Aorta (tissue), 5 donors: ENCODE measurements at regions of chr6 and their contacts with region 1.

Region 1: DNA sequence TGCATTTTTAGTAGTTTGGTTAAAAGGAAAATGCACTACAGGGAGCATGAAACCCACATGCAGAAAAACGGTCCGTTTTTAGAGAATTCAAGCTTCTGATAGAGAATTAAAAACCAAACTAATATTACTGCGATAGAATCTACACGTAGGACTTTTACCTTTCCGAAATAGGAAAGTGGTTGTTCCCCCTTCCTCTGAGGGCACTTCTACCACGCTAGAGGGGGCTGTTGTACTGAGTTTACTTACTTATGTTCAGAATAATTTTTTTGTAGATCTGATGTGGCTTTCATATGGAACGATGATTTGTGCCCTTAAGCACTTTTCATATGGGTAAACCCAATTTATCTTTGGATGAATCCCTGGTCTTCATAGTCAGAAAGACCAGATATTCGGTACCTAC is 264.3 kb upstream of the PLN start:
- DNase-seq: no peak
- ATAC-seq: peak; percentile 78
- H3K4me3 ChIP-seq: no peak overlapping the region
- H3K27ac ChIP-seq: no peak overlapping the region
- H3K4me1 ChIP-seq: peaks cover 2 to 12% of the 10 kb centered on the region in 2 donors
- H3K27me3 ChIP-seq: no peaks in the 10 kb centered on the region

Region 2: GRCh38 chr6:118509009-118509617 is 225.3 kb after region 1 on chr6:
- intact Hi-C with region 1: loop called (anchors 2 kb)
- DNase-seq: no peak
- ATAC-seq: no peak
- H3K4me3 ChIP-seq: no peak overlapping the region
- H3K27ac ChIP-seq: no peak overlapping the region
- H3K4me1 ChIP-seq: peaks cover 2 to 3% of the 10 kb centered on the region in 2 donors
- H3K27me3 ChIP-seq: no peaks in the 10 kb centered on the region

Region 3: GRCh38 chr6:118558464-118559217 is 274.9 kb after region 1 on chr6:
- intact Hi-C with region 1: loop called (anchors 5 kb)
- DNase-seq: no peak
- ATAC-seq: no peak
- H3K4me3 ChIP-seq: peak overlapping the region; percentile 8 to 34
- H3K27ac ChIP-seq: no peak overlapping the region
- H3K4me1 ChIP-seq: no peaks in the 10 kb centered on the region
- H3K27me3 ChIP-seq: no peaks in the 10 kb centered on the region

Region 4: DNA sequence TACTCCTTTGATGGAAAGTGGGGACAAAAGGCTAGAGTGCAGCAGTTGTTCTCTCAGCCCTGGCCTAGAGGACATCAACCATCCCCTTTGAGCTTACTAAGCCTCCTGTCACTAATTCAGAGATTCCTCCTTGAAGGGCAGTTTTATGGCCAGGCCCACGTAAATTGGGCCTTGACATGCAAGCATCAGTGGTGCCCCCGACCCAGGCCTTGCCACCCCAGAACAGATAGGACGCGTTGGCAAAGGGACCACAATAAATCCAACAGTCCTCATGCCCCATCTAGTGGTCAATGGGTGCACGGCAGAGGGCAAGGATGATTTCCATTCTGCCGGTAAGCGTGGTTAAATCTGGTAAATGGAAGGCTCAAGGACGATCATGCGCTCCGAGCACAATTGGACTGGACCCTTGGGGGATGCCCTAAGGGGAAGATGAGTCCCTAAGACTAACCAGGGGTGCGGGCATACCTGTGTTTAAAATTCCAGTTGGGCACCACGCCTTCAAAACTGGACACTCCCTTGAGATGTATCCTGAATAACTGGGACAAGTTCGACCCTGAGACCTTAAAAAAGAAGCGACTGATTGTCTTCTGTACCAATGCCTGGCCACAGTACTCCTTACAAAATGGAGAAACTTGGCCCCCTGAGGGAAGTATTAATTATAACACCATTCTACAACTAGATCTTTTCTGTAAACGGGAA is 335.1 kb after region 1 on chr6:
- intact Hi-C with region 1: loop called (anchors 2 to 5 kb)
- DNase-seq: peak; percentile 55 to 82
- ATAC-seq: peak; percentile 88
- H3K4me3 ChIP-seq: no peak overlapping the region
- H3K27ac ChIP-seq: no peak overlapping the region
- H3K4me1 ChIP-seq: no peaks in the 10 kb centered on the region
- H3K27me3 ChIP-seq: no peaks in the 10 kb centered on the region